PC-9 (cell line): ENCODE measurements at regions of chr1 and their contacts with region 1.

Region 1: DNA sequence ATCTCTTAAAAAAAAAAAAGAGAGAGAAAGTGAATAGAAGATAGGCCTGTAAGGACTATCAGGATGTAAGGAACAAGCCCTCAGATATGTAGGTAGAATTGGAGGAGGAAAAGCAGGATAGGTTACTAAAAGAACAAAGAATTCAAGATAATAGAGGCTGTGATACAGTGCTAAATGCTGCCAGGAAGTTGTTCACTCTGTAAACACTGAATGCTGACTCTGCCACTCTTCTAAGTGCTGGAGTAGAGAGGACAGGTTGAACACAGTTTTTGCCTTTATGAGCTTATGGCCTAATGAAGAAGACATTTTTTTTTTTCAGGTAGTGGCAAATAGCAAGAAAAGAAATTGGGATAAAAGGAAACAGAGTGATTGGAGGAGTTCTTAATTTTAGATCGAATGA is 90.6 kb upstream of the ZNF678 start:
- DNase-seq: no peak
- H3K4me3 ChIP-seq: no peak overlapping the region
- H3K27ac ChIP-seq: no peak overlapping the region
- H3K4me1 ChIP-seq: no peaks in the 10 kb centered on the region
- H3K27me3 ChIP-seq: peaks cover 18% of the 10 kb centered on the region; the same call in 1 of the 2 replicates
- CTCF ChIP-seq: no peak

Region 2: DNA sequence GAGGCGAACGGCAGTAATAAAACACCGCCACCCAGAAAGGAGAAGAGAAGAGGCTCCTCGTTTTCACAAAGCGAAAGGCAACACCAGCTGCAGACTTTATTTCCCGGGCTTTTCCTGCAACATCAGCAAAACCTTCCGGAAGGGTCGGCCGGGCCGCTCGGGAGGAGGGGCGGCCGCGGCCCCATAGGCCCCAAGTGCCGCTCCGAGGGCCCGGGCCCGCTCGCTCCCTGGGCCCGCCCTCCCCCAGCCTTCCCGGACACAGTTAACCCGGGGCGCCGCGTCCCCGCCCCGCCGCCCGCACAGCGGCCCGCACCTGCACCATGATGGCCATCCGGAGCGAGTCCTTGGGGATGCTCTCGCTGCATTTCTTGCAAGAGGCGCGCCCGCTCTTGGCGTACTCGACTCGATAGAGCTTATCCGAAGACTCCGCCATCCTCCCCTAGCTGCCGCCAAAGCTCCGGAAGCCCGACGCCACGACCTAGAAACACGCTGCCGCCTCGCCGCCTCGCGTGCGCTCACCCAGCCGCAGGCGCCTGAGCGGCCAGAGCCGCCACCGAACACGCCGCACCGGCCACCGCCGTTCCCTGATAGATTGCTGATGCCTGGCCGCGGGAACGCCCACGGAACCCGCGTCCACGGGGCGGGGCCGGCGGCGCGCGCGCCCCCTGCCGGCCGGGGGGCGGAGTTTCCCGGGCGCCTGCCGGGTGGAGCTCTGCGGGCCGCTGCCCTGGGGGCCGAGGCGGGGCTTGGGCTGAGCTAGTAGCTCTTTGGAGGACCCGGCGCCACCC is 1065.1 kb before region 1 on chr1 and contains the start of gene PARP1:
- CTCF ChIA-PET with region 1: interaction called, 13 read pairs
- POLR2A ChIA-PET with region 1: no interaction called
- intact Hi-C with region 1: no loop called
- DNase-seq: peak; percentile 74 to 96
- H3K4me3 ChIP-seq: peak within 1 kb of the TSS; percentile 60
- H3K27ac ChIP-seq: no peak within 1 kb of the TSS
- H3K4me1 ChIP-seq: peaks cover 33% of the 10 kb centered on the region
- H3K27me3 ChIP-seq: no peaks in the 10 kb centered on the region
- CTCF ChIP-seq: peak; percentile 43
- total RNA-seq, gene PARP1: 123 and 157 TPM in 2 replicates

Region 3: DNA sequence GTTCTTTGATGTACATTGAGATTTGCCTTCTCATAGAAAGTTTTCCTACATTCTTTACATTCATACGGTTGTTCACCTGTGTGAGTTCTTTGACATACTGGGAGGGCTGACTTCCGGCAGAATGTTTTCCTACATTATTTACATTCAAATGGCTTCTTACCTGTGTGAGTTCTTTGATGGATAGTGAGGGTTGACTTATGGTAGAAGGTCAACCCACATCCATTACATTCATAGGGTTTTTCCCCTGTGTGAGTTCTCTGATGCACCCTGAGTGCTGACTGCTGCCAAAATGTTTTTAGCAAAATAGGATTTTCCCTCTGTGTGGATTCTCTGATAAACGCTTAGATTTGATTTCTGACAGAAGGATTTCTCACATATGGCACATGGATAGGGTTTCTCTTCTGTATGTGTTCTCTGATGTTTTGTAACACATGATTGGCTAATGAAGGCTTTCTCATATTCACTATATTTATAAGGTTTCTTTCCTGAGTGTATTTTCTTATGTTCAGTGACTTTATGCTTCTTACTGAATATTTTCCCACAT is 224.6 kb after region 1 on chr1:
- CTCF ChIA-PET with region 1: no interaction called
- POLR2A ChIA-PET with region 1: no interaction called
- intact Hi-C with region 1: no loop called
- DNase-seq: no peak
- H3K4me3 ChIP-seq: no peak overlapping the region
- H3K27ac ChIP-seq: no peak overlapping the region
- H3K4me1 ChIP-seq: no peaks in the 10 kb centered on the region
- H3K27me3 ChIP-seq: no peaks in the 10 kb centered on the region
- CTCF ChIP-seq: no peak